ENCODE measurements at regions of chr9 and their contacts with region 1.

Region 1: DNA sequence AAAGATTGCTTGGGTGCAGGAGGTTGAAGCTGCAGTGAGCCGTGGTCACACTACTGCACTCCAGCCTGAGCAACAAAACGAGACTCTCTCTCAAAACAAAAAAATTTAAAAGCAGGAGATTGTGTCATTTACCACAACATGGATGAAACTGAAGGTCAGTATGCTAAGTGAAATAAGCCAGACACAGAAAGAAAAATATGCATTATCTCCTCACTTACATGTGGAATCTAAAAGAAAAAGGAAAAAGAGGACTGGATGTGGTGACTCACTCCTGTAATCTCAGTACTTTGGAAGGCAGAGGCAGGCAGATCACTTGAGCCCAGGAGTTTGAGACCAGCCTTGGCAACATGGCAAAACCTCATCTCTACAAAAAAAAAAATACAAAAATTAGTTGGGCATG is 146.8 kb upstream of the DAPK1 start:
- DNase-seq: no peak

Region 2: GRCh38 chr9:87322840-87323635 is 27.9 kb before region 1 on chr9:
- intact Hi-C with region 1: no loop called
- DNase-seq: no peak

Region 3: DNA sequence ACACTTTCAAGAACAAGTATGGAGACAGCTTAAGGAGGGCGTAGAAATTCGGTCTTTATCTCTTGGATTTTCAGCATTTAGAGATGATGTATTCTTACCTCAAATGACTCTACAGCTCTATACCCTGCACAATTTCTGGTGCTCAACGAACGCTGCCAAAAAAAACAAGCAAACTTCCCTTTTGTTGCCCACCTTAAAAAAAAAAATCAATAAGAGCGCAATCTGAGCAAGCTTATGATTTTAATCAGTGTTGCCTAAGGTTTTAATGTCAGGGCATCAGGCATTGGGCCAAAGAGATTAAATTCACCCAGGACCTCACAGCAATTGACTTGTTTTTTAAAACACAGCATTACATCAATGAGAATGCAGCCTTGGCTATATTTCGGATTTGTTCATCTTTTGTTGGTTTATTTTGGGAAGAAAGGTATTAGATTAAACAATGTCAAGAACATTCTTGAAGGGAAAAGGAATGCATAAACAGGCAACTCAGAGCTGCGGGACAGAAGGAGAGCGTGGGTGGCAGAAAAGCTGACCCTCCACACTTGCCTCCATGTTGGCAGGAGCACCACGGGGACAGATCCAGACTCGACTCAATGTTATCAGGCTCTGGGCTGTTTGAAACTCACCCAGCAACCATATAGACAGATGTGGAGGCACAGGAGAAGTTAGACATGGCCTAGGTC is 19.2 kb after region 1 on chr9:
- intact Hi-C with region 1: no loop called
- DNase-seq: no peak

Region 4: DNA sequence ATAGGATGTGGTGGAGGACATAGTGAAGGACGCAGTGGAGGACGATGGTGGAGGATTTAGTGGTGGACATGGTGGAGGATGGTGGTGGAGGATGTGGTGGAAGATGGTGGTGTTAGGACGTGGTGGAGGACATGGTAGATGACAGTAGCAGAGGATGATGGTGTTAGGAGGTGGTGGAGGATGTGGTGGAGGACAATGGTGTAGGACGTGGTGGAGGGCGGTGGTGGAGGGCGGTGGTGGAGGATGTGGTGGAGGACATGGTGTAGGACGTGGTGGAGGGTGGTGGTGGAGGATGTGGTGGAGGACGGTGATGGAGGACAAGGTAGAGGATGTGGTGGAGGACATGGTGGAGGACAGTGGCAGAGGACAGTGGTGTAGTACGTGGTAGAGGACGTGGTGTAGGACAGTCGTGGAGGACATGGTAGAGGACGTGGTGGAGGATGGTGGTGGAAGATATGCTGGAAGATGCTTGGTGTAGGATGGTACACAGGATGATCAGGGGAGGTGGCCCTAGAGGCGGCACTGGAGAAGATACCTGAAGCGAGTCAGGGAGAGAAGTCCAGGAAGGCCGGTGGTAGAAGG is 1709.1 kb after region 1 on chr9:
- intact Hi-C with region 1: loop called in 1 of 2 experiments (anchors 5 kb)
- DNase-seq: no peak

Measured in posterior vena cava (tissue), 2 donors.